ENCODE measurements at regions of chr2 and their contacts with region 1.

Region 1: DNA sequence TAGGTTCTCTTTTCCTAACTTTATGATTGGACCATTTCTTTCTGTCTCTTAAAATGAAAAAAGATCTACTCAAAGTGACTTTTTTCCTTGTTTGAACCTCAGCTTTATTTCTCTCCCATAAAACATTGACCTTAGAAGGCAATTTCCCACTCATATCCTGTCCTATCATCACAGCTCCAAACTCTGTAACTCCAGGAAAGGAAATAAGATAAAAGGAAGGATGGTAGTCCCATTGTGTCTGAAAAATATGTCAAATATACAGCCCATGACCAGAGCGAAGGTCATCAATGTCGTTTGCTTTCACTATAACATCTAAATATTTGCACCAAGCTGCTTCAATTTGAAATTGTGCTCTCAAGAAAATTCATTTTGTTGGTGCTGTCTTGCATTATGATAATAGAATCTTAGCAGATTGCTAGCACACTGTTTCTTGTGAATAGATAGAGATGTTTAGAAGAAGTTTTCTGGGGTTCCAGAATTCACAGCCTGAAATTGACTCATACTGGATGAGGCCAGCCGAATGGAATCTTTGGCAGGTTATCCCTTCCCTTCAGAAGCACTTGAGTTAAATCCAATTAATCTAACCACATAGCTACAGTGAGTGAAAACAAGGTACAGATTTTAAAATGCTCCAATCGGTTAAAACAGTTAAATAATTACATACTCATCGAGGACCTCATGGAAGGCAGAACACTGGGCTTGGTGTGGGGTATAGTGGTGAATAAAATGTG is 95.1 kb downstream of the CRIM1 start:
- DNase-seq: no peak
- ATAC-seq: peak in 3 of 4 donors; percentile 50 to 77 (median 52)
- H3K4me3 ChIP-seq: no peak overlapping the region
- H3K27ac ChIP-seq: peak overlapping the region in 8 of 12 donors; percentile 9 to 76 (median 70)
- H3K4me1 ChIP-seq: peaks cover 12 to 86% (median 54%) of the 10 kb centered on the region in 12 donors
- H3K27me3 ChIP-seq: no peaks in the 10 kb centered on the region
- CTCF ChIP-seq: no peak
- POLR2A ChIP-seq: no peak

Region 2: GRCh38 chr2:36486546-36487044 is 36.0 kb after region 1 on chr2:
- intact Hi-C with region 1: loop called in 2 of 10 experiments (anchors 5 kb)
- DNase-seq: no peak
- ATAC-seq: peak in 2 of 4 donors; percentile 36 to 52
- H3K4me3 ChIP-seq: no peak overlapping the region
- H3K27ac ChIP-seq: peak overlapping the region; percentile 37 to 81 (median 62)
- H3K4me1 ChIP-seq: peaks cover 10 to 67% (median 34%) of the 10 kb centered on the region in 12 donors
- H3K27me3 ChIP-seq: no peaks in the 10 kb centered on the region
- CTCF ChIP-seq: no peak
- POLR2A ChIP-seq: no peak

Measured in heart left ventricle (tissue), 16 donors.